ENCODE measurements at regions of chr14 and their contacts with region 1.

Region 1: GRCh38 chr14:20613094-20614037 is 22.2 kb upstream of the RNASE12 start:
- DNase-seq: peak; percentile 95 to 99 (median 98)
- H3K4me3 ChIP-seq: peak overlapping the region; percentile 49 to 90 (median 76)
- H3K27ac ChIP-seq: peak overlapping the region in 1 of 2 experiments; percentile 49
- H3K4me1 ChIP-seq: peaks cover 5 to 49% (median 22%) of the 10 kb centered on the region in 4 experiments
- H3K27me3 ChIP-seq: no peaks in the 10 kb centered on the region

Region 2: DNA sequence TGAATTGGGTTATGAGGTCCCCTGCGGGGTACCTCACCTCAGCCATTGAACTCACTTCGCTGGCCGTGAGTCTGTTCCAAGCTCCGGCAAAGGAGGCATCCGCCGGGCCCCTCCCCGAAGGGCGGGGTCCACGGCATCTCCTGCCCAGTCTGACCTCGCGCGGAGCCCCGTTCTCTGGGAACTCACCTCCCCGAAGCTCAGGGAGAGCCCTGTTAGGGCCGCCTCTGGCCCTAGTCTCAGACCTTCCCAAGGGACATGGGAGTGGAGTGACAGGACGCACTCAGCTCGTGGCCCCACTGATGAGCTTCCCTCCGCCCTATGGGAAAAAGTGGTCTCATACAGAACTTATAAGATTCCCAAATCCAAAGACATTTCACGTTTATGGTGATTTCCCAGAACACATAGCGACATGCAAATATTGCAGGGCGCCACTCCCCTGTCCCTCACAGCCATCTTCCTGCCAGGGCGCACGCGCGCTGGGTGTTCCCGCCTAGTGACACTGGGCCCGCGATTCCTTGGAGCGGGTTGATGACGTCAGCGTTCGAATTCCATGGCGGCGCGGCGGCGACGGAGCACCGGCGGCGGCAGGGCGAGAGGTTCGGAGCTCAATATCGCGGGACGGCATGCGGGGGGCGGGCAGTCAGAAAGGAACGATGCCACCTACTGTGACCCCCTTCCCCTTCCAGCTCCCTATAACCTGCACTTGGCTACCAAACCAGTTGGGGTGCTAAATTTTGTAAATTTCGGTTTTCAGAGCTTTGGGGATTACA is 270.1 kb before region 1 on chr14 and contains the start of gene PARP2:
- CTCF ChIA-PET with region 1: interaction called, 4 read pairs
- POLR2A ChIA-PET with region 1: interaction called, 11 read pairs
- DNase-seq: peak; percentile 99
- H3K4me3 ChIP-seq: peak within 1 kb of the TSS; percentile 41 to 99 (median 97)
- H3K27ac ChIP-seq: peak within 1 kb of the TSS; percentile 71 to 89
- H3K4me1 ChIP-seq: peaks cover 0 to 12% (median 3%) of the 10 kb centered on the region in 4 experiments
- H3K27me3 ChIP-seq: no peaks in the 10 kb centered on the region

Region 3: GRCh38 chr14:20530771-20531571 is 82.4 kb before region 1 on chr14:
- CTCF ChIA-PET with region 1: interaction called, 10 read pairs
- POLR2A ChIA-PET with region 1: no interaction called
- DNase-seq: peak; percentile 85 to 92 (median 89)
- H3K4me3 ChIP-seq: no peak overlapping the region
- H3K27ac ChIP-seq: no peak overlapping the region
- H3K4me1 ChIP-seq: peaks cover 0 to 12% (median 0%) of the 10 kb centered on the region in 4 experiments
- H3K27me3 ChIP-seq: no peaks in the 10 kb centered on the region

Region 4: GRCh38 chr14:20591241-20591640 is 22.1 kb before region 1 on chr14 and contains the start of gene RNASE12:
- CTCF ChIA-PET with region 1: no interaction called
- POLR2A ChIA-PET with region 1: no interaction called
- DNase-seq: no peak
- H3K4me3 ChIP-seq: peak within 1 kb of the TSS in 1 of 7 experiments; percentile 14
- H3K27ac ChIP-seq: no peak within 1 kb of the TSS
- H3K4me1 ChIP-seq: peaks cover 0 to 11% (median 7%) of the 10 kb centered on the region in 4 experiments
- H3K27me3 ChIP-seq: no peaks in the 10 kb centered on the region

Region 5: DNA sequence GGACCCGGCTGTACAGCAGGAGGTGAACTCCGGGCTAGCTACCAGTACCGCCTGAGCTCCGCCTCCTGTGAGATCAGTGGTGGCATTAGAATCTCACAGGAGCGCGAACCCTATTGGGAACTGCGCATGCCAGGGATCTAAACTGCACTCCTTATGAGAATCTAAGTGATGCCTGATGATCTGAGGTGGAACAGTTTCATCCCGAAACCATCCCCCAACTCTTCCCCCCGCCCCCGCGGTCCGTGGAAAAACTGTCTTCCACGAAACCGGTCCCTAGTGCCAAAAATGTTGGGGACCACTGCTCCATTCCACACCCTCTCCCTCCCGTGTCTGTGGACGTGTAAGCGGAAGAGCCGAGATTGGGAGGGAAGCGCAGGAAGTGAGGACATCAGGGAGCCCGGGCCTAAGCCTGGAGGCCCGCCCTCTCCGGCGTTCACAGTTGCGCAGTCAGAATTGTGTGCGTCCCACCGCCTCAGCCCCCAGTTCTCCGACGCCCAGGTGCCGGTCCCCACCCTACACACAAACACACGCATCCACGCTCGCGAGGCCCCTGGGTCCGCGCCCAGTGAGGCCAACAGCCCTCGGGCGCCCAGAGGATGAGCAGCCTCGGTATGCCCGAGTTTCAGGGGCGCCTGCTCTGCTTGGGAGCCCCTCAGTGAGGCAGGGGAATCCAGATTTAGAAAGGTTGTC is 69.2 kb after region 1 on chr14:
- CTCF ChIA-PET with region 1: interaction called, 14 read pairs
- POLR2A ChIA-PET with region 1: interaction called, 3 read pairs
- DNase-seq: peak; percentile 82 to 86 (median 82)
- H3K4me3 ChIP-seq: peak overlapping the region; percentile 72 to 99 (median 89)
- H3K27ac ChIP-seq: peak overlapping the region; percentile 27 to 84
- H3K4me1 ChIP-seq: peaks cover 24 to 50% (median 41%) of the 10 kb centered on the region in 4 experiments
- H3K27me3 ChIP-seq: no peaks in the 10 kb centered on the region

Region 6: GRCh38 chr14:20707622-20708021 is 94.3 kb after region 1 on chr14:
- CTCF ChIA-PET with region 1: no interaction called
- POLR2A ChIA-PET with region 1: no interaction called
- DNase-seq: no peak
- H3K4me3 ChIP-seq: no peak overlapping the region
- H3K27ac ChIP-seq: no peak overlapping the region
- H3K4me1 ChIP-seq: no peaks in the 10 kb centered on the region
- H3K27me3 ChIP-seq: peaks cover 0 to 2% (median 0%) of the 10 kb centered on the region in 5 experiments

Measured in common myeloid progenitor, CD34-positive (primary cell).